Endothelial cell of umbilical vein (primary cell): ENCODE measurements at regions of chr1 and their contacts with region 1.

Region 1: GRCh38 chr1:167881069-167881468 is 32.9 kb downstream of the ADCY10 start:
- DNase-seq: no peak
- H3K4me3 ChIP-seq: no peak overlapping the region
- H3K27ac ChIP-seq: no peak overlapping the region
- H3K4me1 ChIP-seq: no peaks in the 10 kb centered on the region
- H3K27me3 ChIP-seq: no peaks in the 10 kb centered on the region
- CTCF ChIP-seq: no peak
- POLR2A ChIP-seq: no peak

Region 2: DNA sequence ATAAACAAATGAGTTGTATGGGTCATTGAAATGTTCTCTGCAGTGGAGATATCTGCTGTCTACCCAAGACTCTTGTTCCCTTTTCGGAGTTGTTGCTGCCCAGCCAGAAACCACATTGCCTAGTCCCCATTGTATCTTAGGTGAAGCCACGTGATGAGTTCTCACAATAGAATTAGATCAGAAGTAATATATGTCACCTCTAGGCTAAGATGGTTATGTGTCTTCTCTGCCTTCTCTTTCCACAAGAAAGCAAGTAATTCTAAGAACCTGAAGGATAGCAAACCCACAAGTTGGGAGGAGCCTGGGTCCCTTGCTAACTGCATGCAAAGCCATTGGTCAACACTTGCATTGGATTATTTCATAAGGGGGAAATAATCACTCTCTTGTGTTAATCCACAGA is 43.7 kb before region 1 on chr1:
- CTCF ChIA-PET with region 1: no interaction called
- POLR2A ChIA-PET with region 1: no interaction called
- dilution Hi-C with region 1: no loop called
- intact Hi-C with region 1: loop called (anchors 5 kb)
- DNase-seq: no peak
- H3K4me3 ChIP-seq: no peak overlapping the region
- H3K27ac ChIP-seq: no peak overlapping the region
- H3K4me1 ChIP-seq: no peaks in the 10 kb centered on the region
- H3K27me3 ChIP-seq: peaks cover 3% of the 10 kb centered on the region in 2 experiments
- CTCF ChIP-seq: no peak
- POLR2A ChIP-seq: no peak